ENCODE measurements at regions of chr19 and their contacts with region 1.

Region 1: GRCh38 chr19:19138169-19138981 is at the start of gene TMEM161A:
- DNase-seq: peak; percentile 99
- H3K4me3 ChIP-seq: peak within 1 kb of the TSS; percentile 65 to 84 (median 82)
- H3K27ac ChIP-seq: peak within 1 kb of the TSS; percentile 46 to 82 (median 80)
- H3K4me1 ChIP-seq: peaks cover 8 to 27% (median 17%) of the 10 kb centered on the region in 4 donors
- H3K27me3 ChIP-seq: no peaks in the 10 kb centered on the region
- CTCF ChIP-seq: no peak
- EP300 ChIP-seq: no peak
- POLR2A ChIP-seq: peak; percentile 26
- total RNA-seq, gene TMEM161A: 12.0 to 26.8 (median 16.9) TPM

Region 2: GRCh38 chr19:18469069-18469846 is 669.1 kb before region 1 on chr19:
- intact Hi-C with region 1: no loop called
- DNase-seq: no peak
- H3K4me3 ChIP-seq: no peak overlapping the region
- H3K27ac ChIP-seq: peak overlapping the region in 3 of 4 donors; percentile 5 to 21 (median 20)
- H3K4me1 ChIP-seq: peaks cover 69 to 91% (median 84%) of the 10 kb centered on the region in 4 donors
- H3K27me3 ChIP-seq: no peaks in the 10 kb centered on the region
- CTCF ChIP-seq: peak; percentile 56 to 80 (median 59)
- EP300 ChIP-seq: no peak
- POLR2A ChIP-seq: no peak

Region 3: GRCh38 chr19:19053508-19054314 is 84.7 kb before region 1 on chr19:
- intact Hi-C with region 1: loop called (anchors 5 kb)
- DNase-seq: no peak
- H3K4me3 ChIP-seq: no peak overlapping the region
- H3K27ac ChIP-seq: no peak overlapping the region
- H3K4me1 ChIP-seq: no peaks in the 10 kb centered on the region
- H3K27me3 ChIP-seq: no peaks in the 10 kb centered on the region
- CTCF ChIP-seq: peak; percentile 54 to 66 (median 57)
- EP300 ChIP-seq: no peak
- POLR2A ChIP-seq: no peak

Region 4: DNA sequence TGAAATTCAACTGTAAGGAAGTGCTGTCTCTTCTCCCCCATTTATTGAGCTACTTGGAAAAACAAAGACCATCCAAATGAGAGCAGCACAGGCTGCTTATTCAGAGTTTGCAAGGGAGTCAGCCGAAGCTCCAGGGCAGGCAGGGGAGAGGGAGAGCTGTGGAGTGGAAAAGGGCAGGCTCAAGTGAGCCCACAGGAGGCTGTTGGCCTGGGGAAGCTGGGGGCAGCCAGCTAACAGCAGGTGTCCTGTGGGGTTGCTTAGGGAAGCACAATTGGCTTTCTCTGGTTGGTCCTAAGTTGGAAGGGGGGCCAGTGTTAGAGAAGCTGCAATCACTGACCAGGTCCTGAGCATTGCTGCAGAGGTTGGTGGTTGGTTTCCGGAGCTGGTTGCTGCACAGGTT is 50.7 kb before region 1 on chr19:
- intact Hi-C with region 1: no loop called
- DNase-seq: no peak
- H3K4me3 ChIP-seq: no peak overlapping the region
- H3K27ac ChIP-seq: no peak overlapping the region
- H3K4me1 ChIP-seq: peaks cover 0 to 4% (median 0%) of the 10 kb centered on the region in 4 donors
- H3K27me3 ChIP-seq: no peaks in the 10 kb centered on the region
- CTCF ChIP-seq: no peak
- EP300 ChIP-seq: no peak
- POLR2A ChIP-seq: no peak

Region 5: GRCh38 chr19:19098703-19099632 is 39.4 kb before region 1 on chr19:
- intact Hi-C with region 1: no loop called
- DNase-seq: no peak
- H3K4me3 ChIP-seq: no peak overlapping the region
- H3K27ac ChIP-seq: no peak overlapping the region
- H3K4me1 ChIP-seq: no peaks in the 10 kb centered on the region
- H3K27me3 ChIP-seq: no peaks in the 10 kb centered on the region
- CTCF ChIP-seq: no peak
- EP300 ChIP-seq: no peak
- POLR2A ChIP-seq: no peak